Naive thymus-derived CD4-positive, alpha-beta T cell (primary cell): ENCODE measurements at regions of chr2 and their contacts with region 1.

Region 1: GRCh38 chr2:160429248-160430000 is 64.2 kb downstream of the RBMS1 start:
- DNase-seq: peak in 6 of 9 donors; percentile 44 to 67 (median 58)
- ATAC-seq: peak; percentile 70
- H3K4me3 ChIP-seq: no peak overlapping the region
- H3K4me3 Mint-ChIP-seq: peak overlapping the region in 6 of 10 donors; percentile 7 to 94 (median 30)
- H3K27ac ChIP-seq: peak overlapping the region; percentile 69
- H3K27ac Mint-ChIP-seq: peak overlapping the region; percentile 51 to 93 (median 89)
- H3K4me1 ChIP-seq: peaks cover 33 to 35% of the 10 kb centered on the region in 2 donors
- H3K4me1 Mint-ChIP-seq: peaks cover 32 to 91% (median 74%) of the 10 kb centered on the region in 7 donors
- H3K27me3 ChIP-seq: no peaks in the 10 kb centered on the region
- H3K27me3 Mint-ChIP-seq: no peaks in the 10 kb centered on the region

Region 2: DNA sequence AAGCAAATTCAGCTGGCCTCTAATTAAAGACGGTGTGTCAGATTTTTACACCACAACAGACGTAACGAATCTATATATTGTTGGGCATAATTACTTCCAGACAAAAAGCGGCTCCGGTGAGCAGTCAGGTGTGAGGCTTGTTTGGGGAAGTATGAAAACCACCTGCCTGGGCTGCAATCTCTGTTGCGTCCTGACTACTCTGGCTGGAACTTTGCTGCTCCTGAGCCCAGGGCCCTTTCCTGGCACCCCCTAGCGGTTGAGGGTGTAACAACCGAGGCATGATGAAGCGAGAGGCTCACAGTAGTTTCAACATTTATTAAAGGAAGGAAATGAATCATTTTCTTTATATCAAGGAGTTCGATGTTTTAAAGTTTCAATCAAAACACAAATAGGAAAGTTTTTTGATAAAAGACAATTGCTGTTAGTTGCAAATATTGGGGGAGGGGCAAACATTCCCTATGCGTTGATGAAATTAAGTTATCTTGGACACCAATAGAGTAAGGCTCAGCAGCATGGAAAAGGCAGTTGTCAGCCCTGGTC is 218.8 kb before region 1 on chr2:
- CTCF ChIA-PET with region 1: no interaction called
- POLR2A ChIA-PET with region 1: no interaction called
- intact Hi-C with region 1: no loop called
- DNase-seq: peak; percentile 46 to 79 (median 71)
- ATAC-seq: peak; percentile 90
- H3K4me3 ChIP-seq: no peak overlapping the region
- H3K4me3 Mint-ChIP-seq: no peak overlapping the region
- H3K27ac ChIP-seq: no peak overlapping the region
- H3K27ac Mint-ChIP-seq: peak overlapping the region in 1 of 9 donors; percentile 19
- H3K4me1 ChIP-seq: no peaks in the 10 kb centered on the region
- H3K4me1 Mint-ChIP-seq: peaks cover 0 to 11% (median 8%) of the 10 kb centered on the region in 7 donors
- H3K27me3 ChIP-seq: no peaks in the 10 kb centered on the region
- H3K27me3 Mint-ChIP-seq: peaks cover 0 to 22% (median 5%) of the 10 kb centered on the region in 5 donors

Region 3: GRCh38 chr2:160417745-160418397 is 11.6 kb before region 1 on chr2:
- CTCF ChIA-PET with region 1: interaction called, 15 read pairs
- POLR2A ChIA-PET with region 1: interaction called, 26 read pairs
- intact Hi-C with region 1: loop called (anchors 1 kb)
- DNase-seq: peak in 4 of 9 donors; percentile 31 to 76 (median 56)
- ATAC-seq: peak; percentile 84
- H3K4me3 ChIP-seq: no peak overlapping the region
- H3K4me3 Mint-ChIP-seq: peak overlapping the region in 6 of 10 donors; percentile 7 to 52 (median 36)
- H3K27ac ChIP-seq: peak overlapping the region; percentile 43
- H3K27ac Mint-ChIP-seq: peak overlapping the region; percentile 36 to 90 (median 75)
- H3K4me1 ChIP-seq: peaks cover 10 to 31% of the 10 kb centered on the region in 2 donors
- H3K4me1 Mint-ChIP-seq: peaks cover 34 to 88% (median 72%) of the 10 kb centered on the region in 7 donors
- H3K27me3 ChIP-seq: no peaks in the 10 kb centered on the region
- H3K27me3 Mint-ChIP-seq: peaks cover 0 to 3% (median 0%) of the 10 kb centered on the region in 5 donors

Region 4: DNA sequence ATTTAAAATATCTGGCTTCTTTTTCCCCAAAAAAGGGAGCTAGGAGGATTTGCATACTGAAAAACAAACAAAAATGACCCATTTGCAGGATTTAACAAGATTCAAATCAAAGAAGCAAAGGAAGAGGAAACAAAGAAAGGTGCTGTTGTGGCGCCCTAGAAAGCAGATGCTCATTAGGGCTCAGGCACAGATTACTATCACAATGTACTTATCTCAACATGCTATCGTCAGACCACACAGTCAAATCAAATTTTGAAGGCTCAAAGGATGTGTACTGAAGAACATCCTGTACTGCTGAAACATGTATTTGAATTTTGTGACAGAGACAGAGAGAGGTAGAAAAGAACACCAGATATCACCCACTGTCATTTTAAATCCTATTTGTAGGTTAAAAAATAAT is 53.2 kb after region 1 on chr2:
- CTCF ChIA-PET with region 1: no interaction called
- POLR2A ChIA-PET with region 1: interaction called, 15 read pairs
- intact Hi-C with region 1: loop called in 1 of 2 experiments (anchors 1 kb)
- DNase-seq: peak in 7 of 9 donors; percentile 58 to 87 (median 78)
- ATAC-seq: peak; percentile 97
- H3K4me3 ChIP-seq: no peak overlapping the region
- H3K4me3 Mint-ChIP-seq: peak overlapping the region; percentile 45 to 81 (median 72)
- H3K27ac ChIP-seq: peak overlapping the region; percentile 70
- H3K27ac Mint-ChIP-seq: peak overlapping the region; percentile 73 to 97 (median 95)
- H3K4me1 ChIP-seq: peaks cover 18 to 66% of the 10 kb centered on the region in 2 donors
- H3K4me1 Mint-ChIP-seq: peaks cover 33 to 100% (median 85%) of the 10 kb centered on the region in 7 donors
- H3K27me3 ChIP-seq: no peaks in the 10 kb centered on the region
- H3K27me3 Mint-ChIP-seq: no peaks in the 10 kb centered on the region

Region 5: DNA sequence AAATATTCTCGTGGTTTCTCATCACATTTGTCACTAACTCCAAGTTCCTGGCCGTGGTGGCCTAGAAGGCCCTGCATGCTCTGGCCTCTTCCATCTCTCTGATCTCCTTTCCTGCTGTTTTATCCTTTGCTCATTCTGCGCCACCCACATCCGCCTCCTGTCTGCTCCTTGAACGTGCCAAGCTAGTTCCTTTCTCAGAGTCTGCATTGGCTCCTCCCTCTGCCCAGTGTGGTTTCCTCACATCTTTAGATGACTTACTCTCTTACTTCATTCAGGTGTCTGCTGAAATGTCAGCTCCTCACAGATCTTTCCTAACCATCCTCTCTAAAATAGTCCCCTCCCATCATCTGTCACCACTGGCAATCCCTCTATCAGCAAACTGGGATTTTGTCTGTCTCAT is 222.8 kb after region 1 on chr2:
- CTCF ChIA-PET with region 1: no interaction called
- POLR2A ChIA-PET with region 1: interaction called, 4 read pairs
- intact Hi-C with region 1: loop called (anchors 1 to 5 kb)
- DNase-seq: peak; percentile 20 to 81 (median 72)
- ATAC-seq: peak; percentile 97
- H3K4me3 ChIP-seq: no peak overlapping the region
- H3K4me3 Mint-ChIP-seq: peak overlapping the region; percentile 13 to 79 (median 52)
- H3K27ac ChIP-seq: no peak overlapping the region
- H3K27ac Mint-ChIP-seq: peak overlapping the region in 8 of 9 donors; percentile 1 to 47 (median 8)
- H3K4me1 ChIP-seq: peaks cover 11 to 22% of the 10 kb centered on the region in 2 donors
- H3K4me1 Mint-ChIP-seq: peaks cover 23 to 45% (median 34%) of the 10 kb centered on the region in 7 donors
- H3K27me3 ChIP-seq: no peaks in the 10 kb centered on the region
- H3K27me3 Mint-ChIP-seq: peaks cover 3 to 10% (median 8%) of the 10 kb centered on the region in 5 donors

Region 6: DNA sequence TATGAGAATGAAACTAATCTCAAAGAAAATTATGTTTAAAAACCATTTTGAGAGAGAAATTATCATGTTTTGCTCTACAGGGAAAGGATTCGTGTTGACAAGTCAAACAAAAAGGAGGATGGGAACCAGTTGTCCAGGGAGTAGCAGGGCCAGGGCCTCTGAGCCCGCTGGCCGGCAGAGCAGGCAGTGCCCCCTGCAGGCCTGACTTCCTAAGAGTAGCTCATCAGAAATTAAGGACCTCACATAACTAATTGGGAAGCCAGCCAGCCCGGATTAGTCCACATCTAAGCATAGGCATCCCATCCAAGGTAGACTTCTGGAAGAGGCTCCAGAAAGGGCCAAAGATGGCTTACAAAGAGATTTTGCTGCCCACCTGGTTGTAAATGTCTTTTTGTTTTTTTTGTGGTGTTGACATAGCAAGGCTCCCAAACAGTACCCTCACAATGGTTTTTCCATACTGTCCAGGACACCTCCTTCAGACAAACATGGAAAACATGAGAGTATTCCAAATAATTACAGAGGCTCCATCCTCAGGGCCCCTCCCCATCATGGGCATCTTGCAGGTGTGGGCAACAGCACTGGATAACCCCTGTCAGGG is 489.6 kb after region 1 on chr2:
- CTCF ChIA-PET with region 1: no interaction called
- POLR2A ChIA-PET with region 1: no interaction called
- intact Hi-C with region 1: loop called (anchors 2 kb)
- DNase-seq: peak in 7 of 9 donors; percentile 3 to 28 (median 10)
- ATAC-seq: peak; percentile 47
- H3K4me3 ChIP-seq: no peak overlapping the region
- H3K4me3 Mint-ChIP-seq: no peak overlapping the region
- H3K27ac ChIP-seq: no peak overlapping the region
- H3K27ac Mint-ChIP-seq: peak overlapping the region in 1 of 9 donors; percentile 6
- H3K4me1 ChIP-seq: no peaks in the 10 kb centered on the region
- H3K4me1 Mint-ChIP-seq: no peaks in the 10 kb centered on the region
- H3K27me3 ChIP-seq: no peaks in the 10 kb centered on the region
- H3K27me3 Mint-ChIP-seq: peaks cover 0 to 7% (median 0%) of the 10 kb centered on the region in 5 donors

Region 7: DNA sequence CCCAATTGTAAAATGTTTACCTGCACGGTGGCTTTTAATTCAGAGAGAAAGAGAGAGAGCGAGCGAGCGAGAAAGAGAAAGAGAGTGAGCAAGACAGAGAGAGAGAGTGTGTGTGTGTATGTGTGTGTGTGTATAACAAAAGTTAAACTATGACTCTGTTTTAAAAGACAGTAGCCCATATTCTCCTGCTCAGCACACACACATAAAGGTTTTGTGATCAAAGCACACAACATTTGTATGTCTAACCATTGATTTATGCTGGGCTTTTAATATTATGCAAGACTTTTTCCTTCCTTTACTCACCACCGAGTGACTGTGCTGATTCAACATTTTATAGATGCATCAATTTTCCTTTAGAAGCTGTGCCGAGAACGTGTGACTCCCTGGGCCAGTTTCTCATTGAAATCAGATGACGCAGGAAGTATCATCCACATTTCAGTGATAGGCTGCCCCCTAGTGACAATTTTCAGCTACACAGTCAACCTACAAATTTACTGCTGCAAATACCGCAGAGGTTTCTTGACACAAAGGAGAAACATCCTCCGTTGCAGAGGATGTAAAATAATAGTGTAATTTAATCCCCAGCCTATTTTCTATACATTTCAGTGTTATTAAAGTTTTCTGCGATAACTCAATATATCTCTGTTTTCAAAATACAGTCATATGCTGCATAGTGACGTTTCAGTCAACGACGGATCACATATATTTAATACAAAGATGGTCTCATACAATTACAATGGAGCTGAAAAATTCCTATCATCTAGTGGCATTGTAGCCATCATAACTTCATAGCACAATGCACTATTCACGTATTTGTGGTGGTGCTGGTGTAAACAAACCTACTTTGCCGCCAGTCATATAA is 564.9 kb after region 1 on chr2:
- CTCF ChIA-PET with region 1: no interaction called
- POLR2A ChIA-PET with region 1: no interaction called
- intact Hi-C with region 1: loop called in 1 of 2 experiments (anchors 5 kb)
- DNase-seq: peak; percentile 11 to 86 (median 80)
- ATAC-seq: peak; percentile 95
- H3K4me3 ChIP-seq: no peak overlapping the region
- H3K4me3 Mint-ChIP-seq: peak overlapping the region in 9 of 10 donors; percentile 4 to 76 (median 55)
- H3K27ac ChIP-seq: no peak overlapping the region
- H3K27ac Mint-ChIP-seq: peak overlapping the region in 7 of 9 donors; percentile 0 to 84 (median 26)
- H3K4me1 ChIP-seq: no peaks in the 10 kb centered on the region
- H3K4me1 Mint-ChIP-seq: peaks cover 5 to 13% (median 11%) of the 10 kb centered on the region in 7 donors
- H3K27me3 ChIP-seq: no peaks in the 10 kb centered on the region
- H3K27me3 Mint-ChIP-seq: peaks cover 0 to 13% (median 0%) of the 10 kb centered on the region in 5 donors